Spleen (tissue), 13 donors: ENCODE measurements at regions of chr17 and their contacts with region 1.

Region 1: GRCh38 chr17:47229535-47230443 is 20.6 kb downstream of the MYL4 start:
- DNase-seq: peak; percentile 86
- H3K4me3 ChIP-seq: peak overlapping the region in 2 of 8 donors; percentile 22 to 55
- H3K27ac ChIP-seq: no peak overlapping the region
- H3K4me1 ChIP-seq: peaks cover 17 to 44% (median 34%) of the 10 kb centered on the region in 6 donors
- H3K27me3 ChIP-seq: no peaks in the 10 kb centered on the region
- CTCF ChIP-seq: peak; percentile 74 to 98 (median 95)
- POLR2A ChIP-seq: peak in 1 of 3 donors; percentile 1

Region 2: GRCh38 chr17:47315451-47316266 is 85.9 kb after region 1 on chr17:
- intact Hi-C with region 1: loop called (anchors 5 kb)
- DNase-seq: no peak
- H3K4me3 ChIP-seq: no peak overlapping the region
- H3K27ac ChIP-seq: no peak overlapping the region
- H3K4me1 ChIP-seq: peaks cover 0 to 14% (median 8%) of the 10 kb centered on the region in 6 donors
- H3K27me3 ChIP-seq: no peaks in the 10 kb centered on the region
- CTCF ChIP-seq: peak; percentile 67 to 89 (median 84)
- POLR2A ChIP-seq: no peak